ENCODE measurements at regions of chr11 and their contacts with region 1.

Region 1: DNA sequence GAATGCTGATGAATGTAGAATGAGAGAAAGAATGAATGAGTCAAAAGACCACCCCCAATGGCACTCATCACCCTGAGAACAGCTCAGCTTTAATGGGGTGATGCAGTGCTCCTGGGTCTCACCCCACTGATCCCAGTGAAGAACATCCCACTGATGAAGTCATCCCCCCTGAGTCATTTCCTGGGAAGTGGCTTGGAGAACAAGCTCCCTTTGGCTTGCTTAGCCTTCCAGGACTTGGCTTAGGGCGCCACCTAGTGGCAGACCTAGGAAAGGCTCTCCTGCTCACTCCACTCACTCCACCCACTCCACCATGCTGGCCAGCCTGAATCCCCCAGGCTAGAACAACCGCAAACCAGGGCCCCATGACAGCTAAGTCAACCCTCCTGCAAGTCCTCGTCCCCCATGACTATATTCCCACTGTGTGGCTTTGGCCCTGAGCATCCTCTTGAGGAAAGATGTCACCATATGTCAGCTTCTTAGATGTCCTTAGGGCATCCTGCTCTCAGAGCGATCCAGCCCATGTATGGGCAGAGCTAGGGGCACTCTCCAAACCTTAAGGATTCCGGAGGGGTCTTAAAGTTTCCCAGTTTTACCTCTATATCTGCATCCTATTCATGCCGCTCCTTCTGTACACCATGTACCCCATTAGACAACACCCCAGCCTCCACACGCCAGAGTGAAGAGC is 17.8 kb upstream of the TMPRSS13 start:
- DNase-seq: peak; percentile 83
- ATAC-seq: peak; percentile 32
- H3K4me3 ChIP-seq: no peak overlapping the region
- H3K4me3 Mint-ChIP-seq: no peak overlapping the region
- H3K27ac ChIP-seq: no peak overlapping the region
- H3K27ac Mint-ChIP-seq: peak overlapping the region; percentile 60
- H3K4me1 ChIP-seq: peaks cover 33 to 46% of the 10 kb centered on the region in 2 donors
- H3K4me1 Mint-ChIP-seq: peaks cover 38% of the 10 kb centered on the region
- H3K27me3 ChIP-seq: no peaks in the 10 kb centered on the region
- H3K27me3 Mint-ChIP-seq: peaks cover 9% of the 10 kb centered on the region
- CTCF ChIP-seq: peak; percentile 98

Region 2: DNA sequence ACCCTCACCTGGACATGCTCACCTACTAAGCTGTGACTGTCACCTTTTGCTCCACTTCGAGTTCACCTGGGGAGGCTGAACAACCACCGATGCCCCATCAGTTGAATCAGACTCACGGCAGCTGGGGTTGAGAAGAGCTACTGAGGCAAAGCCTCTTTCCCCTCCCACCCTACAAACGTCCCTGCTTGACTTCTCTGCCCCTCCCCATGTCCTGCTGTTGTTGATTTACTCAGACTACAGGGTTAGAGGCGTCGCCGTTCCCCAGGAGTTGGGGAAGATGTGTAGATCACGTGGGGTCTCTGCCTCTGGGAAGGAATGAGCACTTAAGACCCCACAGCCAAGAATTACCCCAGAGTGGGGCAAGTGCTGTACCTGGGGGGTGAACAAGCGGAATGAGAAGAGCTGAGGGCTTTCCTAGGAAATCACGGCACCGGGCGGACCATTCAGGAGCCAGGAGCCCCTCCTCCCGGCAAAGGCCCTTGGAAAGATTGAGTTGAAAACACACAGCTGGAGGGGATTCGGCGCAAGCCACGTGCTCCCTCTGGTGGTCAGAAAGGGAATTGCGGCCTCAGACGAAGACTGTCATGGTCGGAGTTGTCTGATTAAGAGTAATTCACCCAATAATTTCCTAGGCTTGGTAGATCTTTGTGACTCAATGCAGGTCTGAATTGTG is 129.5 kb before region 1 on chr11:
- CTCF ChIA-PET with region 1: interaction called, 104 read pairs
- POLR2A ChIA-PET with region 1: interaction called, 19 read pairs
- intact Hi-C with region 1: loop called (anchors 1 kb)
- DNase-seq: peak; percentile 89
- ATAC-seq: peak; percentile 11
- H3K4me3 ChIP-seq: peak overlapping the region in 4 of 5 experiments; percentile 2 to 62 (median 50)
- H3K4me3 Mint-ChIP-seq: peak overlapping the region; percentile 89
- H3K27ac ChIP-seq: peak overlapping the region in 1 of 2 donors; percentile 91
- H3K27ac Mint-ChIP-seq: peak overlapping the region; percentile 93
- H3K4me1 ChIP-seq: peaks cover 46 to 58% of the 10 kb centered on the region in 2 donors
- H3K4me1 Mint-ChIP-seq: peaks cover 55% of the 10 kb centered on the region
- H3K27me3 ChIP-seq: peaks cover 0 to 11% (median 2%) of the 10 kb centered on the region in 4 experiments
- H3K27me3 Mint-ChIP-seq: peaks cover 10% of the 10 kb centered on the region
- CTCF ChIP-seq: peak; percentile 98

Region 3: DNA sequence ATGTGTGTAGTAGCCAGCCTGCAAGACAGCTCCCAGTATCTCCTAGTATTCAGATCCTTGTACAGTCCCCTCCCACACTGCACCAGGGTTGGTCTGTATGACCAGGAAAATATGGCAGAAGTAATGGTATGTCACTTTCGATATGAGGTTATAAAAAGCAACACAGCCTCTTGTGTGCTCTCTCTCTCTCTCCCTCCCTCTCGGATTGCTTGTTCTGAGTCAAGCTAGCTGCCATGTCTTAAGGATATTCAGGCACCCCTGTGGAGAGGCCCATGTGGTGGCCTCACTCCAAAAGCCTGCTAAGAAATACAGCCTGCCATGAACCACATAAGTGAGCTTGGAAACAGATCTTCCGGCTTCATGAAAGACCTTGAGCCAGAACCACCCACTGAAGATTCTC is 95.9 kb before region 1 on chr11:
- CTCF ChIA-PET with region 1: interaction called, 176 read pairs
- POLR2A ChIA-PET with region 1: no interaction called
- intact Hi-C with region 1: no loop called
- DNase-seq: no peak
- ATAC-seq: no peak
- H3K4me3 ChIP-seq: no peak overlapping the region
- H3K4me3 Mint-ChIP-seq: no peak overlapping the region
- H3K27ac ChIP-seq: no peak overlapping the region
- H3K27ac Mint-ChIP-seq: no peak overlapping the region
- H3K4me1 ChIP-seq: no peaks in the 10 kb centered on the region
- H3K4me1 Mint-ChIP-seq: no peaks in the 10 kb centered on the region
- H3K27me3 ChIP-seq: peaks cover 0 to 24% (median 7%) of the 10 kb centered on the region in 4 experiments
- H3K27me3 Mint-ChIP-seq: peaks cover 44% of the 10 kb centered on the region
- CTCF ChIP-seq: no peak

Region 4: GRCh38 chr11:117959438-117960149 is 12.6 kb after region 1 on chr11:
- CTCF ChIA-PET with region 1: interaction called, 13 read pairs
- POLR2A ChIA-PET with region 1: no interaction called
- intact Hi-C with region 1: no loop called
- DNase-seq: no peak
- ATAC-seq: no peak
- H3K4me3 ChIP-seq: no peak overlapping the region
- H3K4me3 Mint-ChIP-seq: no peak overlapping the region
- H3K27ac ChIP-seq: peak overlapping the region in 1 of 2 donors; percentile 38
- H3K27ac Mint-ChIP-seq: no peak overlapping the region
- H3K4me1 ChIP-seq: peaks cover 7 to 8% of the 10 kb centered on the region in 2 donors
- H3K4me1 Mint-ChIP-seq: peaks cover 17% of the 10 kb centered on the region
- H3K27me3 ChIP-seq: no peaks in the 10 kb centered on the region
- H3K27me3 Mint-ChIP-seq: no peaks in the 10 kb centered on the region
- CTCF ChIP-seq: no peak

Region 5: GRCh38 chr11:117993988-117994745 is 47.2 kb after region 1 on chr11:
- CTCF ChIA-PET with region 1: interaction called, 110 read pairs
- POLR2A ChIA-PET with region 1: interaction called, 87 read pairs
- intact Hi-C with region 1: no loop called
- DNase-seq: no peak
- ATAC-seq: no peak
- H3K4me3 ChIP-seq: no peak overlapping the region
- H3K4me3 Mint-ChIP-seq: no peak overlapping the region
- H3K27ac ChIP-seq: no peak overlapping the region
- H3K27ac Mint-ChIP-seq: peak overlapping the region; percentile 71
- H3K4me1 ChIP-seq: peaks cover 28 to 36% of the 10 kb centered on the region in 2 donors
- H3K4me1 Mint-ChIP-seq: peaks cover 60% of the 10 kb centered on the region
- H3K27me3 ChIP-seq: no peaks in the 10 kb centered on the region
- H3K27me3 Mint-ChIP-seq: no peaks in the 10 kb centered on the region
- CTCF ChIP-seq: no peak

Region 6: DNA sequence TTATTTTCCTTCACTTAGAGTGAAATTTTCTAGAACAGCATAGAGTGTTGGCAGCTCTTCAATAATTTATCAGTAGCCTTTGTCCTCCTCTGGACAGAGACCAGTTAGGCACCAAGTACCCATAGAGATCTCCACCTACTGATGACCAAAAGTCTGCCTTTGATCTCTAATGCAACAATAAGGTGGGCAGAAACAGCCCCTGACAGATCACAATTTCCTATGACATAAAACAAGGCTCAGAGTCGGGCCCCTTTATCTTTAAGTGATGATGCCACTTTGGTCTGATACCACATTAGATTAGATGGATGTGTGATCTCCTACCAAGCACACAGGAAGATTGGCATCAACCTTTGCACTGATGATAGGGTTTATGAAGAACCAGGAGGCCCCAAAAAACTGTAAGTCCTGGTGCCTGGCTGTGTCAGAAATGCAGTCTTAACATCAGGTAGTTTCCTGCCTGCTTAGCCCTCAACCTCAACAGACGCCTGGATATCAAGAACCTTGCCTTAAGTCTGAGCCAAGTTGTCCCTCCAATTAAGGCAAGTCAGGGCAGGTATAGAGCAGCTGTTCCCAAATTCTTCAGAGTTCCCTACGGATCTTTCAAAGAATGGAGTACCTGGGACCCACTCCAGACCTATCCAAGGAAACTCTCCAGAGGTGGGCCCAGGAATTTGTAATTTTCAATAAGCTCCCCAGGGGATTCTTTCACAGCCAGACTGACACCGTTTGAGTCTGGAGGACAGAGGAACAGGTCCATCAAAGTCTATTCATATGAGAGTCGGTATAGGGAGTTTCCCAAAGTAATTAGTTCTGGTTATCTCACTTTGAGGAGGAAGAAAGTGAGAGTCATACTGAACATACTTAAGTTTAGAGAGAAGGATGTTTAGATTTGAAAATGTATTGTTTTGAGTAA is 99.3 kb after region 1 on chr11:
- CTCF ChIA-PET with region 1: interaction called, 495 read pairs
- POLR2A ChIA-PET with region 1: interaction called, 47 read pairs
- intact Hi-C with region 1: no loop called
- DNase-seq: no peak
- ATAC-seq: no peak
- H3K4me3 ChIP-seq: no peak overlapping the region
- H3K4me3 Mint-ChIP-seq: no peak overlapping the region
- H3K27ac ChIP-seq: no peak overlapping the region
- H3K27ac Mint-ChIP-seq: no peak overlapping the region
- H3K4me1 ChIP-seq: peaks cover 11 to 15% of the 10 kb centered on the region in 2 donors
- H3K4me1 Mint-ChIP-seq: peaks cover 40% of the 10 kb centered on the region
- H3K27me3 ChIP-seq: no peaks in the 10 kb centered on the region
- H3K27me3 Mint-ChIP-seq: no peaks in the 10 kb centered on the region
- CTCF ChIP-seq: no peak

Region 7: GRCh38 chr11:118572061-118572980 is 625.3 kb after region 1 on chr11 and contains the start of gene ARCN1:
- CTCF ChIA-PET with region 1: no interaction called
- POLR2A ChIA-PET with region 1: no interaction called
- intact Hi-C with region 1: no loop called
- DNase-seq: peak; percentile 89
- ATAC-seq: peak; percentile 92
- H3K4me3 ChIP-seq: peak within 1 kb of the TSS; percentile 76 to 100 (median 99)
- H3K4me3 Mint-ChIP-seq: peak within 1 kb of the TSS; percentile 97
- H3K27ac ChIP-seq: peak within 1 kb of the TSS; percentile 95 to 97
- H3K27ac Mint-ChIP-seq: peak within 1 kb of the TSS; percentile 94
- H3K4me1 ChIP-seq: peaks cover 19 to 21% of the 10 kb centered on the region in 2 donors
- H3K4me1 Mint-ChIP-seq: peaks cover 44% of the 10 kb centered on the region
- H3K27me3 ChIP-seq: no peaks in the 10 kb centered on the region
- H3K27me3 Mint-ChIP-seq: no peaks in the 10 kb centered on the region
- CTCF ChIP-seq: no peak
- total RNA-seq, gene ARCN1: 74.7 and 83.2 TPM in 2 replicates

Region 8: DNA sequence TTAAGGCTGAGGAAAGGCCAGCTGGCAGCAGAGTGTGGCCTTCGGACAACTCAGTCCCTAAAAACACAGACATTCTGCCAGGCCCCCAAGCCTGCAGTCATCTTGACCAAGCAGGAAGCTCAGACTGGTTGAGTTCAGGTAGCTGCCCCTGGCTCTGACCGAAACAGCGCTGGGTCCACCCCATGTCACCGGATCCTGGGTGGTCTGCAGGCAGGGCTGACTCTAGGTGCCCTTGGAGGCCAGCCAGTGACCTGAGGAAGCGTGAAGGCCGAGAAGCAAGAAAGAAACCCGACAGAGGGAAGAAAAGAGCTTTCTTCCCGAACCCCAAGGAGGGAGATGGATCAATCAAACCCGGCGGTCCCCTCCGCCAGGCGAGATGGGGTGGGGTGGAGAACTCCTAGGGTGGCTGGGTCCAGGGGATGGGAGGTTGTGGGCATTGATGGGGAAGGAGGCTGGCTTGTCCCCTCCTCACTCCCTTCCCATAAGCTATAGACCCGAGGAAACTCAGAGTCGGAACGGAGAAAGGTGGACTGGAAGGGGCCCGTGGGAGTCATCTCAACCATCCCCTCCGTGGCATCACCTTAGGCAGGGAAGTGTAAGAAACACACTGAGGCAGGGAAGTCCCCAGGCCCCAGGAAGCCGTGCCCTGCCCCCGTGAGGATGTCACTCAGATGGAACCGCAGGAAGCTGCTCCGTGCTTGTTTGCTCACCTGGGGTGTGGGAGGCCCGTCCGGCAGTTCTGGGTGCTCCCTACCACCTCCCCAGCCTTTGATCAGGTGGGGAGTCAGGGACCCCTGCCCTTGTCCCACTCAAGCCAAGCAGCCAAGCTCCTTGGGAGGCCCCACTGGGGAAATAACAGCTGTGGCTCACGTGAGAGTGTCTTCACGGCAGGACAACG is 948.4 kb after region 1 on chr11:
- CTCF ChIA-PET with region 1: no interaction called
- POLR2A ChIA-PET with region 1: no interaction called
- intact Hi-C with region 1: no loop called
- DNase-seq: peak; percentile 91
- ATAC-seq: peak; percentile 59
- H3K4me3 ChIP-seq: peak overlapping the region in 4 of 5 experiments; percentile 28 to 51 (median 44)
- H3K4me3 Mint-ChIP-seq: peak overlapping the region; percentile 79
- H3K27ac ChIP-seq: peak overlapping the region; percentile 95 to 99
- H3K27ac Mint-ChIP-seq: peak overlapping the region; percentile 86
- H3K4me1 ChIP-seq: peaks cover 73 to 83% of the 10 kb centered on the region in 2 donors
- H3K4me1 Mint-ChIP-seq: peaks cover 83% of the 10 kb centered on the region
- H3K27me3 ChIP-seq: no peaks in the 10 kb centered on the region
- H3K27me3 Mint-ChIP-seq: no peaks in the 10 kb centered on the region
- CTCF ChIP-seq: no peak